ENCODE measurements at regions of chr20 and their contacts with region 1.

Region 1: DNA sequence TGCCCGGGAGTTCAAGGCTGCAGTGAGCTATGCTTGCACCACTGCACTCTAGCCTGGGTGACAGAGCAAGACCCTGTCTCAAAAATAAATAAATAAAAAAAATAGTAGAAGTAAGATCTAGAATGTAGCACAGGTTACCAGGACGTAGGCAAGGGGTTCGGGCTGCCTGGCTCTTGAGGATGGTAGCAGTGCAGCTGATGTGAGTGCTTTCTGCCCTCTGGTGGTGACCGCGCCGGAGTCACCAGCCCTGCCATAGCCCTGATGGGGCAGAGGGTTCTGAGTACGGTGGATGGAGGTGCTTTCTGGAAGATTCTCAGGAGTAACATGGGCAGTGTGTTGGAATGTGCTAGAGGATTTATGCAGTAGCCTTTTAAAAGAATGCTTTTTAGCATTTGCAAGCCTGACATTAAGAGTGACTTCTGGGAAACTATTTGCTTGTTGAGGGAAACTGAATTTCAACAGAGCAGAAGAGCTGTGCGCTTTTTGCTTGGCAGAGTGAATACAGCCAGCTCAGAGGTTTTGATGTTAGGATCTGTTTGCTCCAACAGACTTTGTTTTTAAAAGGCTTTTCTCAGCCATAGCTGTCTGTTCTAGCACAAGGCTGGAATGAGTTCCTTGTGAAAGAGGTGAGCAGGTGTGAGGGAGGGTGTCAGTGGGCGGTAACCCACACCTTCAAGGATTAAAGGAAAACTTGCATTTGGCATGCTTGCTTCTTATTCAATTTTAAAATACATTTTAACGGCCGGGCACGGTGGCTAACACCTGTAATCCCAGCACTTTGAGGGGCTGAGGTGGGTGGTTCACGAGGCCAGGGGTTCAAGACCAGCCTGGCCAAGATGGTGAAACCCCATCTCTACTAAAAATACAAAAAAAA is 65.9 kb downstream of the PTPN1 start:
- DNase-seq: peak; percentile 76
- H3K4me3 ChIP-seq: no peak overlapping the region
- H3K27ac ChIP-seq: peak overlapping the region; percentile 68
- H3K4me1 ChIP-seq: peaks cover 75% of the 10 kb centered on the region
- H3K27me3 ChIP-seq: no peaks in the 10 kb centered on the region
- CTCF ChIP-seq: peak; percentile 80

Region 2: DNA sequence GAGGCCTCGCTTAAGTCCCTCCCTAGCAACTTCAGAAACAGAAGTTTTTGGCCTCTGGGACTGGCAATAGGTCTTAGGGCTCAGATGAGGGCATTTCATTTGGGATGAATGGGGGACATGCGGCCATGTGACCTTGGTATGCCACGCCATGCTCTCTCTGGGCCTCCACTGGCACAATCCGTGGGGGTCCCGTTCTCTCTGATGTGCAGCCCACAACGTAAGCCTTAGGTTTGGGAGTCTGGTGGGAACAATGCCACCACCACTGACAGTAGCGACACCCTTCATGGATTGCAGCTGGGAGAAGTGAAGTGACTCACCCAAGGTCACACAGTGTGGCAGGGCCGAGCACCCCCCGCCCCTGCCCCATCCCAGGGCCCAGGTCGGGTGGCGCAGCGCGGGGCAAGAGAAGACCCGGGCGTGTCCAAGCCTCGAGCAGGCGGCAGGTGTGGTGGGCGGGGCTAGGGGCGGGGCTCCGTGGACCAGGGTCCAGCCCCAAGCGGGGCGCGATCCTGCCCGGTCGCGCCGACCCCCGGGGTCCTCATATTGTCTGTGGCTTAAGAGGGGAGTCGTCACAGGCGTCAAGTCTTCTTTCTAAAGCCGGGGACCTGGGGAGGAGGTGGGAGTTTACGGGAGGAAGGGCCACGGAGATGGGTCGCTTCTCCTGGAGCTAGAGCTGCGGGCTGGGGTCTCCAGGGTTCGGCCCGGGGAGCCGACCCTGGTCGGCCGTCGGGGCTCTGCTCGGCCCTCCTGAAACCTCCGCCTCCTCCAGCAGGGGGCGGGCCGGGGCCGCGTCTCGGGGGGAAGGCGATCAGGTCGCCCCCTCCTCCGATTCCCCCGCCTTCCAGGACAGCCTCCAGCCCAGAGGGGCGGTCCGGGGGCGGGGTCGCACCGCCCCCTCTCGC is 386.2 kb before region 1 on chr20:
- intact Hi-C with region 1: loop called (anchors 5 kb)
- DNase-seq: peak; percentile 88
- H3K4me3 ChIP-seq: peak overlapping the region; percentile 94
- H3K27ac ChIP-seq: peak overlapping the region; percentile 99
- H3K4me1 ChIP-seq: peaks cover 53% of the 10 kb centered on the region
- H3K27me3 ChIP-seq: no peaks in the 10 kb centered on the region
- CTCF ChIP-seq: peak; percentile 82

Region 3: DNA sequence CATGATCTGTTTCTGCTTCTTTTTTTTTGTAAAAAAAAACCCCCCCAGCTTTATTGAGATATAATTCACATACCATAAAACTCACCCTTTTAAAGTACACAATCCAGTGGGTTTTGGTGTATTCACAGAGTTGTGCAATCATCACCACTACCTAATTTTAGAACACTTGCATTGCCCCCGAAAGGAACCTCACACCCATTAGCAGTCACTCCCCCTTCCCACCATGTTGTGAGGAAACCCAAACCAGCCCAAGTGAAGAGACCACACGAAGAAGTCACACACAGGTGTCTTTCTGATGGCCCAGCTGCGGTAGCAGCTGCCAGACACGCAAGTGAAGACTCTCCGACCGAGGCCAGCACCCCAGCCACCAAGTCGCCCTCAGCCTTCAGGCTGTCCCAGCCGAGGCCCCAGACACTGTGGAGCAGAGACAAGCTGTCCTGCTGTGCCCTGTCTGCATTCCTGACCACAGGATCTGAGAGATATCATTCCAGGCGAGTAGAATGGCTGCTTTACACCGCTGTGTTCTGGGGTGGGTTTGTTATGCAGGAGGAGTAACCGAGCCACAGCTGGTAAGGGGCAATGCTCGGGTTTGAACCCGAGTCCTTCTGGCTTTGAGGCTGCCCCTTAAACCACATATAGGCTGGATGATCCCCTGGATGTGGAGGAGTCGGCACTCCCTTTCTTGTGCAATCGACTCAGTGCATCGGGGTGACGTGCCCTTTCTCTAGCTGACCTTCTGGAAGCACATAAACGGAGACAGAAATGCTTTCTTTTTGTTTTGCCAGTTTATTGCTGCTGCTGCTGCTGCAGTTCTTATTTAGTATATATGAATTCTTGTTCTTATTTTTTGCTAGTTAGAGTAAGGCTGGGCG is 125.0 kb before region 1 on chr20:
- intact Hi-C with region 1: no loop called
- DNase-seq: no peak
- H3K4me3 ChIP-seq: peak overlapping the region; percentile 46
- H3K27ac ChIP-seq: peak overlapping the region; percentile 67
- H3K4me1 ChIP-seq: peaks cover 30% of the 10 kb centered on the region
- H3K27me3 ChIP-seq: no peaks in the 10 kb centered on the region
- CTCF ChIP-seq: no peak

Region 4: GRCh38 chr20:50478162-50479036 is 97.7 kb before region 1 on chr20:
- intact Hi-C with region 1: loop called (anchors 10 kb)
- DNase-seq: peak; percentile 47
- H3K4me3 ChIP-seq: no peak overlapping the region
- H3K27ac ChIP-seq: no peak overlapping the region
- H3K4me1 ChIP-seq: peaks cover 19% of the 10 kb centered on the region
- H3K27me3 ChIP-seq: no peaks in the 10 kb centered on the region
- CTCF ChIP-seq: peak; percentile 55

Region 5: DNA sequence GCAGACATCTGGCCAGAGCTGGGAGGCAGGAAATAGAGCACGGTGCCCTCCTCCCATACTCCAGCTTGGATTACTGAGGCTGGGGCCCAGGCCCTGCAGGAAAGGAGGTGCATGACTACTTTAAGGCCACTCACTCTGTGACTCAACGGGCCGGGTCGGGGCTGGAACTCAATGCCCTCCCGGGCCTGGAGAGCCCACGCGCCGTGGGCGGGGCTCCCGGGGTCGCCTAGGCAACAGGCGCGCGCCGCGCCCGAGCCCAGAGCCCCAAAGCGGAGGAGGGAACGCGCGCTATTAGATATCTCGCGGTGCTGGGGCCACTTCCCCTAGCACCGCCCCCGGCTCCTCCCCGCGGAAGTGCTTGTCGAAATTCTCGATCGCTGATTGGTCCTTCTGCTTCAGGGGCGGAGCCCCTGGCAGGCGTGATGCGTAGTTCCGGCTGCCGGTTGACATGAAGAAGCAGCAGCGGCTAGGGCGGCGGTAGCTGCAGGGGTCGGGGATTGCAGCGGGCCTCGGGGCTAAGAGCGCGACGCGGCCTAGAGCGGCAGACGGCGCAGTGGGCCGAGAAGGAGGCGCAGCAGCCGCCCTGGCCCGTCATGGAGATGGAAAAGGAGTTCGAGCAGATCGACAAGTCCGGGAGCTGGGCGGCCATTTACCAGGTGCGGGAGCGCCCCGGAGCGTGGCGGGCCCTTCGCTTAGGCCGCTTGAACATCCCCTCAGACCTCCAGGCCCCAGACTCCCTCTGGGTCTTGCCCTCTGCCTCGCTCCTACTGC is 66.0 kb before region 1 on chr20 and contains the start of gene PTPN1:
- intact Hi-C with region 1: loop called (anchors 10 kb)
- DNase-seq: peak; percentile 99
- H3K4me3 ChIP-seq: peak within 1 kb of the TSS; percentile 100
- H3K27ac ChIP-seq: peak within 1 kb of the TSS; percentile 93
- H3K4me1 ChIP-seq: peaks cover 56% of the 10 kb centered on the region
- H3K27me3 ChIP-seq: no peaks in the 10 kb centered on the region
- CTCF ChIP-seq: peak; percentile 16
- total RNA-seq, gene PTPN1: 25.7 TPM

Measured in left ventricle myocardium inferior (tissue), 1 donor.